ENCODE measurements at regions of chr20 and their contacts with region 1.

Region 1: DNA sequence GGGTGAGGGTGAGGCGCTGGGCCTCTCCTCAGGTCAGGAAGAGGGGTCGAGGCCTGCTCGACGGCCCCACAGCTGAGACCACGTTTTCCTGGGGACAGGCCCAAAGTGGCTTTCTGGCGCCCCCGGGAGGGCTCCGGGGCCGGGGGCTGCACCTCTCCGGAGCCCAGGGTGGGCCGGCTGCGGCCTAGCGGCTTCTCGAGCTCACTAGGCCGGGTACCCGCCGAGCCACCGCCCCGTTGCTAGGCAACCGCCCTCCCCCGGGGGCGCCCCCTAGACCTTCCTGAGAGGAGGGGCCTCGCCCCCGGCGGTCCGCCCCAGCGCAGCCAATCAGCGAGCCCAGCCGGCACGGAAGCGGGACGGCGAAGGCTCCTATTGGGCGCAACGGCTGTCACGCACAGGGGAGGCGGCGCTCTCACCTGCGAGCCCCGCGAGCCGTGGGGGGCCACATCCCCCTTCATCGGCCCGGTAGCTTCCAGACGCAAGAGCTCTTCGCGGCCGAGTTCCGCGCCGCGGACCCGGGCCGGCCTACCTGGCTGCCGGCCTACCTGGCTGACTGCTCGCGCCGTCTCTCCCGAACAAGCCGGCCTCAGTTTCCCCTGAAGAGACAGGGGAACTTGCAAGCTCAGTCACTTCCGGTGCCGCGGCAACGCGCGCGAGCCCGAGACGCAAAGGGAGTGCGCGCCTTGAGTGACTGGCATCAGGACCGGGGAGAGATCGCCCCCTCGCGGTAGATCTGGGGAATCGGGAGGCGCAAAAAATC is 831 bp upstream of the BCL2L1 start:
- DNase-seq: peak; percentile 99
- ATAC-seq: peak; percentile 92
- H3K4me3 ChIP-seq: peak overlapping the region; percentile 60 to 85
- H3K27ac ChIP-seq: peak overlapping the region; percentile 99
- H3K4me1 ChIP-seq: peaks cover 33% of the 10 kb centered on the region
- H3K27me3 ChIP-seq: no peaks in the 10 kb centered on the region
- CTCF ChIP-seq: peak; percentile 100

Region 2: GRCh38 chr20:31572701-31573554 is 150.6 kb before region 1 on chr20:
- CTCF ChIA-PET with region 1: interaction called, 11 read pairs
- POLR2A ChIA-PET with region 1: interaction called, 7 read pairs
- in situ Hi-C with region 1: no loop called
- intact Hi-C with region 1: no loop called
- DNase-seq: peak; percentile 98
- ATAC-seq: peak; percentile 86
- H3K4me3 ChIP-seq: peak overlapping the region; percentile 54 to 75
- H3K27ac ChIP-seq: peak overlapping the region; percentile 99
- H3K4me1 ChIP-seq: peaks cover 56% of the 10 kb centered on the region
- H3K27me3 ChIP-seq: no peaks in the 10 kb centered on the region
- CTCF ChIP-seq: no peak

Region 3: GRCh38 chr20:31605031-31605901 is 118.2 kb before region 1 on chr20 and contains the start of gene ID1:
- CTCF ChIA-PET with region 1: interaction called, 6 read pairs
- POLR2A ChIA-PET with region 1: interaction called, 13 read pairs
- in situ Hi-C with region 1: no loop called
- intact Hi-C with region 1: no loop called
- DNase-seq: peak; percentile 95
- ATAC-seq: peak; percentile 67
- H3K4me3 ChIP-seq: peak within 1 kb of the TSS; percentile 73 to 88
- H3K27ac ChIP-seq: peak within 1 kb of the TSS; percentile 100
- H3K4me1 ChIP-seq: peaks cover 58% of the 10 kb centered on the region
- H3K27me3 ChIP-seq: no peaks in the 10 kb centered on the region
- CTCF ChIP-seq: no peak
- total RNA-seq, gene ID1: 152 TPM

Region 4: DNA sequence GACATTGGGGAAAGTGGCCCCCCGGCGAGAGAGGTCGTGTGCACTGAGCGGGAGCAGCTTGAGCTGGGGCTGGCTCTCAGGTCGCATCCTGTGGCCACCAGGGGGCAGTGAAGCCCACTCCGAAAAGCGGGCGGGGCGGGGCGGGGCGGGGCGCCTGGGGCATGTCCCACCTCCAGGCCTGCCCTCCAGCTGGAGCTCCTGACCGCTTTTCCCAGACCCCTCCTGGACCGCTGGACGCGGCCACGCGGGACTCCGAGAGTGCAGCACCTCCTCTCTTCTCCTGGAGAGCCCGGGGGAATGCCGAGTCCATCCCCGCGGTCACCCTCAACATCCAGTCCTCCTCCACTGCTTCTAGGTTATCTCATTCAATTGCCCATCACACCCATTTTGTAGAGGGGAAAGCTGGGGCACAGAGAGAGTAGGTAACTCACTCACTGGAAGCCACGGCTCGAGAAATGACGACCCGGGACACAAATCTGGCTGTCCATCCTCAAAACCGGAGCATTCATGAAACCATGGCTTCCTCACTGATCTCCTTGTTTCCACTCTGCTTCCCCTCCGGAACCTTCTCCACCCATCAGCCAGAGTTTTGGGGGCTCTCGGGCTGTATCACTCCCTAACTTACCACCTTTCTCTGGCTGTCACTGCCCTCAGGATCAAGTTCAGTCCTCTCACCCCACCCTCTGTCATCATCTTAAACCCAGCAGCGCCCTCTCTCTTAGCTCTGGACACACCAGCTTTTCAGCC is 61.7 kb before region 1 on chr20:
- CTCF ChIA-PET with region 1: interaction called, 195 read pairs
- POLR2A ChIA-PET with region 1: interaction called, 21 read pairs
- in situ Hi-C with region 1: no loop called
- intact Hi-C with region 1: loop called (anchors 1 kb)
- DNase-seq: peak; percentile 74
- ATAC-seq: peak; percentile 81
- H3K4me3 ChIP-seq: peak overlapping the region; percentile 27 to 64
- H3K27ac ChIP-seq: peak overlapping the region; percentile 78
- H3K4me1 ChIP-seq: peaks cover 40% of the 10 kb centered on the region
- H3K27me3 ChIP-seq: no peaks in the 10 kb centered on the region
- CTCF ChIP-seq: peak; percentile 98

Region 5: GRCh38 chr20:31674895-31675827 is 48.3 kb before region 1 on chr20:
- CTCF ChIA-PET with region 1: interaction called, 6 read pairs
- POLR2A ChIA-PET with region 1: interaction called, 5 read pairs
- in situ Hi-C with region 1: no loop called
- intact Hi-C with region 1: loop called (anchors 5 kb)
- DNase-seq: no peak
- ATAC-seq: peak; percentile 23
- H3K4me3 ChIP-seq: no peak overlapping the region
- H3K27ac ChIP-seq: peak overlapping the region; percentile 27
- H3K4me1 ChIP-seq: peaks cover 72% of the 10 kb centered on the region
- H3K27me3 ChIP-seq: no peaks in the 10 kb centered on the region
- CTCF ChIP-seq: no peak

Region 6: DNA sequence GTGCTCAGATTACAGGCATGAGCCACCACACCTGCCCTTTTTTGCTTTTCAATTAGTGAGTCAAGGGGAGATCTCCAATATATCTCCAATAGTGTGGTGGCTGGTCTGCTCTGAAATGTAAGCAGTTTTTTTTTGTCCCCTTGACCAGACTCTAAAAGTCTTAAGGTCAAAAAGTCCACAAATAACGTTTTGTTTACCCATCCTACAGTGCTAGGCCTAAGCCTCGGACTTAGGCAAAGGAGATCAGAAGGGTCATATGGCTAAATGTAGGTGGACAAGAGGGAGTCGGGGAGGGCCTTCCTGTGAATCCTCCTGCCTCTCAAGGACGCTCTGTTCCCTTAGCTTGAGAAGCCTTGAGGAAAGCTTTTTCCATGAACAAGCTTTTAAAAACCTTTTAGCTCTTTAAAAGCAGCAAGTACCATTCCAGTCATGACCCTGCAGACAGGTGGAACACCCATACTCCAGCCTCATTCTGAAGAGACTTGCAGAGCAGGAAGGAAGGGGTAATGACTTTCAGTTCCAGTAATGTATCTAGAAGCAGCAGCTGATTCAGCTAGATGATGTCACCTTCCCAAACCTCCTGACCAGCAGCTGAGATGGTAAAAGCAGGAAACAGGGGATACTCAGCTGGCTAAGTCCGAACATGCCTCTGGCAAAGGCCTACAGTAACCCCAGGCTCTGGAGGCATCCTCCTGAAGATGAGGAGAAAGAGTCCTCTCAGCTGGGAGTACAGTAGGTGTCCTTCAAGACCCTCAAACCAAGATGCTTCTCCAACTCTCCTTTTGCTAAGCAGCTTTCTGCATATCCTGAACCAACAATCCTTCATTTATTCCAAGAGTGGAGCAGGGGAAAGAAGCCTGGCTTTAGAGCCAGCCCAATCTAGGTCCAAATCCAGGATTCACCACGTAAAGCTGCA is 24.4 kb before region 1 on chr20:
- CTCF ChIA-PET with region 1: interaction called, 15 read pairs
- POLR2A ChIA-PET with region 1: interaction called, 6 read pairs
- in situ Hi-C with region 1: no loop called
- intact Hi-C with region 1: no loop called
- DNase-seq: peak; percentile 99
- ATAC-seq: peak; percentile 43
- H3K4me3 ChIP-seq: no peak overlapping the region
- H3K27ac ChIP-seq: peak overlapping the region; percentile 71
- H3K4me1 ChIP-seq: peaks cover 40% of the 10 kb centered on the region
- H3K27me3 ChIP-seq: no peaks in the 10 kb centered on the region
- CTCF ChIP-seq: no peak

Region 7: DNA sequence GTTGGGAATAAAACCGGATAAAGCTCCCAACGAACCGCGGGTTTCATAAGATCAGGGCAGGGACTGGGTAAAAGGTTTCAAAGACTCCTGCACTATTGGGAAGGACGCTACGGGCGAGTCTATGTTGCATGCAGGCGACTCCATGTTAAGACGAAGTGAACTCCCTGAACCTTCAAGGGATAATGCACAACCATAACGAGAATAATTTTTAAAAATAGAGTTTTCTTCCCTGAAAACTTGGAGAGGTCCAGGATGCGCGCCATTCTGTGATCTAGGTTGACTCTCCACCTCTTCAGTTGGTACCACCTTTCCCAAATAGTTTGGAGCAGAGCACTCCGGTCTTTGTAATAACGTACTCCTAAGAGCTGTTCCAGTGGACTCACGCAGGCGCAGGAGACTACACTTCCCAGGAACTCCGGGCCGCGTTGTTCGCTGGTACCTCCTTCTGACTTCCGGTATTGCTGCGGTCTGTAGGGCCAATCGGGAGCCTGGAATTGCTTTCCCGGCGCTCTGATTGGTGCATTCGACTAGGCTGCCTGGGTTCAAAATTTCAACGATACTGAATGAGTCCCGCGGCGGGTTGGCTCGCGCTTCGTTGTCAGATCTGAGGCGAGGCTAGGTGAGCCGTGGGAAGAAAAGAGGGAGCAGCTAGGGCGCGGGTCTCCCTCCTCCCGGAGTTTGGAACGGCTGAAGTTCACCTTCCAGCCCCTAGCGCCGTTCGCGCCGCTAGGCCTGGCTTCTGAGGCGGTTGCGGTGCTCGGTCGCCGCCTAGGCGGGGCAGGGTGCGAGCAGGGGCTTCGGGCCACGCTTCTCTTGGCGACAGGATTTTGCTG is 15.4 kb after region 1 on chr20 and contains the start of gene TPX2:
- CTCF ChIA-PET with region 1: interaction called, 11 read pairs
- POLR2A ChIA-PET with region 1: interaction called, 6 read pairs
- in situ Hi-C with region 1: no loop called
- intact Hi-C with region 1: no loop called
- DNase-seq: peak; percentile 100
- ATAC-seq: peak; percentile 99
- H3K4me3 ChIP-seq: peak within 1 kb of the TSS; percentile 71 to 79
- H3K27ac ChIP-seq: peak within 1 kb of the TSS; percentile 99
- H3K4me1 ChIP-seq: peaks cover 24% of the 10 kb centered on the region
- H3K27me3 ChIP-seq: no peaks in the 10 kb centered on the region
- CTCF ChIP-seq: no peak
- total RNA-seq, gene TPX2: 248 TPM

Region 8: DNA sequence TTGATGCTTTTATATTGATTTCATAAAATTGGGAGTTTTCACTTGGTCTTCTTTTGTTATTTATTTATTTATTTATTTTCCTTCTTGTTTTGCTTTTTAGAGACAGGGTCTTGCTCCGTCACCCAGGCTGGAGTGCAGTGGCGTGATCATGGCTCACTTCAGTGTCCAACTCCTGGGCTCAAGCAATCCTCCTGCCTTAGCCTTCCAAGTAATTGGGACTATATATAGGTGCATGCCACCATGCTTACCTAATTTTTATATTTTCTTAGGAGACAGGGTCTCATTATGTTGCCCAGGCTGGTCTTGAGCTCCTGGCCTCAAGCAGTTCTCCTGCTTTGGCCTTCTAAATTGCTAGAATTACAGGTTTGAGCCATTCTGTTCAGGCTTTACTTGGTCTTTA is 57.3 kb after region 1 on chr20:
- CTCF ChIA-PET with region 1: no interaction called
- POLR2A ChIA-PET with region 1: no interaction called
- in situ Hi-C with region 1: no loop called
- intact Hi-C with region 1: no loop called
- DNase-seq: no peak
- ATAC-seq: no peak
- H3K4me3 ChIP-seq: no peak overlapping the region
- H3K27ac ChIP-seq: no peak overlapping the region
- H3K4me1 ChIP-seq: no peaks in the 10 kb centered on the region
- H3K27me3 ChIP-seq: no peaks in the 10 kb centered on the region
- CTCF ChIP-seq: no peak

Measured in Panc1 (cell line).